ENCODE measurements at regions of chr7 and their contacts with region 1.

Region 1: GRCh38 chr7:116258734-116259133 is 48.4 kb downstream of the TES start:
- DNase-seq: peak; percentile 77

Region 2: DNA sequence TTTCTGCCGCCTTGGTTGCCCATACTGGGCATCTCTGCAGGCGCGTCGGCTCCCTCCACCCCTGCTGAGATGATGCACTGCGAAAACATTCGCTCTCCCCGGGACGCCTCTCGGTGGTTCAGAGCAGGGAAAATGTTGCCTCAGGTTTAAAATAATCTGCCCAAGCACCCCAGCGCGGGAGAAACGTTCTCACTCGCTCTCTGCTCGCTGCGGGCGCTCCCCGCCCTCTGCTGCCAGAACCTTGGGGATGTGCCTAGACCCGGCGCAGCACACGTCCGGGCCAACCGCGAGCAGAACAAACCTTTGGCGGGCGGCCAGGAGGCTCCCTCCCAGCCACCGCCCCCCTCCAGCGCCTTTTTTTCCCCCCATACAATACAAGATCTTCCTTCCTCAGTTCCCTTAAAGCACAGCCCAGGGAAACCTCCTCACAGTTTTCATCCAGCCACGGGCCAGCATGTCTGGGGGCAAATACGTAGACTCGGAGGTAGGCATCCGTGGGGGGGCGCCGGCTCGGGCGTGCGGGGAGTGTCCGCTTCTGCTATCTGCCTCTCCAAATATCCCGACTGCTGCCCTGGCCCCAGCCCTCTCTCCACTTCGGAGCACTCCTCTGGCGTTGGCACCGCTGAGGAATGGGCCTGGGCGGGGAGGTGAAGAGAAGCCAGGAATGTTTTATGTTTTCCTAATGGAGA is 266.0 kb after region 1 on chr7 and contains the start of gene CAV1:
- in situ Hi-C with region 1: loop called (anchors 25 kb)
- DNase-seq: peak; percentile 59
- total RNA-seq, gene CAV1: 18.2 and 18.5 TPM in 2 replicates

Region 3: GRCh38 chr7:116591202-116592040 is 332.7 kb after region 1 on chr7:
- in situ Hi-C with region 1: loop called (anchors 10 kb)
- DNase-seq: peak; percentile 67

Measured in SK-MEL-5 (cell line).